ENCODE measurements at regions of chr9 and their contacts with region 1.

Region 1: GRCh38 chr9:96217754-96218693 is 84.0 kb downstream of the HSD17B3 start:
- DNase-seq: peak; percentile 48 to 88 (median 77)
- ATAC-seq: peak; percentile 81
- H3K4me3 ChIP-seq: peak overlapping the region; percentile 9 to 27
- H3K4me3 Mint-ChIP-seq: peak overlapping the region; percentile 80
- H3K27ac ChIP-seq: no peak overlapping the region
- H3K27ac Mint-ChIP-seq: no peak overlapping the region
- H3K4me1 ChIP-seq: peaks cover 8% of the 10 kb centered on the region
- H3K4me1 Mint-ChIP-seq: peaks cover 12% of the 10 kb centered on the region
- H3K27me3 ChIP-seq: peaks cover 0 to 8% of the 10 kb centered on the region in 2 experiments
- H3K27me3 Mint-ChIP-seq: peaks cover 37% of the 10 kb centered on the region
- CTCF ChIP-seq: peak; percentile 98

Region 2: GRCh38 chr9:95379630-95380029 is 838.4 kb before region 1 on chr9:
- CTCF ChIA-PET with region 1: interaction called, 11 read pairs
- POLR2A ChIA-PET with region 1: no interaction called
- intact Hi-C with region 1: loop called (anchors 1 to 5 kb)
- DNase-seq: peak in 4 of 9 experiments; percentile 15 to 56 (median 50)
- ATAC-seq: no peak
- H3K4me3 ChIP-seq: no peak overlapping the region
- H3K4me3 Mint-ChIP-seq: no peak overlapping the region
- H3K27ac ChIP-seq: no peak overlapping the region
- H3K27ac Mint-ChIP-seq: no peak overlapping the region
- H3K4me1 ChIP-seq: no peaks in the 10 kb centered on the region
- H3K4me1 Mint-ChIP-seq: no peaks in the 10 kb centered on the region
- H3K27me3 ChIP-seq: peaks cover 0 to 5% of the 10 kb centered on the region in 2 experiments
- H3K27me3 Mint-ChIP-seq: peaks cover 29% of the 10 kb centered on the region
- CTCF ChIP-seq: peak; percentile 33

Region 3: GRCh38 chr9:95815143-95815542 is 402.9 kb before region 1 on chr9:
- CTCF ChIA-PET with region 1: no interaction called
- POLR2A ChIA-PET with region 1: no interaction called
- intact Hi-C with region 1: no loop called
- DNase-seq: no peak
- ATAC-seq: no peak
- H3K4me3 ChIP-seq: no peak overlapping the region
- H3K4me3 Mint-ChIP-seq: no peak overlapping the region
- H3K27ac ChIP-seq: no peak overlapping the region
- H3K27ac Mint-ChIP-seq: no peak overlapping the region
- H3K4me1 ChIP-seq: no peaks in the 10 kb centered on the region
- H3K4me1 Mint-ChIP-seq: peaks cover 2% of the 10 kb centered on the region
- H3K27me3 ChIP-seq: no peaks in the 10 kb centered on the region
- H3K27me3 Mint-ChIP-seq: no peaks in the 10 kb centered on the region
- CTCF ChIP-seq: no peak

Region 4: DNA sequence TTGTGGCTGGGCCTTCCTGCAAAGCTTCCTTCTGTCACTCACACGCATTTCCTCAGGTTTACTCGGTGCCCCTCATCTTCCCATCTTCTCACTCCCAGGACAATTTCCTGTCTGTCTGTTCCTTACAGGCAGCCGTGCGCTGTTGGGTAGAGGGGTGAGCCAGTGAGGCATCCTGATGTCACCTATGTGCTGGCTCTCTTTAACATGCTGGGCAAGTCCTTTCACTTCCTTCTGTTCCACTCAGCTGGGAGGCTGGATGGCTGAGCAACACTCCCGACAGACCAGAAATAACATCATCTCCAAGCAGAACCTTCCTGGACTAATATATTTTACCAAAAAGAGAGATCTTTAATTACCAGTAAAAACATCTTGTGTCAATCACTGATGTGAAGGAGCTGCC is 19.0 kb before region 1 on chr9:
- CTCF ChIA-PET with region 1: interaction called, 13 read pairs
- POLR2A ChIA-PET with region 1: no interaction called
- intact Hi-C with region 1: no loop called
- DNase-seq: no peak
- ATAC-seq: no peak
- H3K4me3 ChIP-seq: no peak overlapping the region
- H3K4me3 Mint-ChIP-seq: no peak overlapping the region
- H3K27ac ChIP-seq: no peak overlapping the region
- H3K27ac Mint-ChIP-seq: no peak overlapping the region
- H3K4me1 ChIP-seq: peaks cover 6% of the 10 kb centered on the region
- H3K4me1 Mint-ChIP-seq: peaks cover 9% of the 10 kb centered on the region
- H3K27me3 ChIP-seq: peaks cover 0 to 2% of the 10 kb centered on the region in 2 experiments
- H3K27me3 Mint-ChIP-seq: peaks cover 16% of the 10 kb centered on the region
- CTCF ChIP-seq: no peak

Measured in CD8-positive, alpha-beta T cell (primary cell).